ENCODE measurements at regions of chr4 and their contacts with region 1.

Region 1: DNA sequence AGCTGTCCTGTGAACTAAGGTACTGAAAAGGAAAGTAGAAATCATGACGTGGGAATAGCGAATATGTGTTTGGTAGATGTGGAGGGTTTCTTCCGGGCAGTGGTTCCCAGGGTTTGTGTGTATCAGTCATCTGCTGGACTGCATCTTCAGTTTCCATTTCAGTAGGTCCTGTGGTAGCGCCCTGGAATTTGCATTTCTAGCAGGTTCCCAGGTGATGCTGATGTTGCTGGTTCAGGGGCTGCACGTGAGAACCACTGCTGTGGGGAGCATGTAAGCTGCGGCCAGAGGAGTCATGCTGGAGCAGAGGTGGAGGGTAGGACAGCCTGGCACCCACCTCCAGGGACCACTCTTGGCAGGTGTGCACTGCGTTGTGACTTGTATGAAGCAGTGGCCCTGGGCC is 47.1 kb downstream of the ARHGAP10 start:
- DNase-seq: no peak
- ATAC-seq: no peak
- H3K4me3 ChIP-seq: no peak overlapping the region
- H3K27ac ChIP-seq: no peak overlapping the region
- H3K4me1 ChIP-seq: peaks cover 34 to 77% of the 10 kb centered on the region in 2 experiments
- H3K27me3 ChIP-seq: no peaks in the 10 kb centered on the region
- CTCF ChIP-seq: no peak
- POLR2A ChIP-seq: no peak
- RAD21 ChIP-seq: no peak

Region 2: DNA sequence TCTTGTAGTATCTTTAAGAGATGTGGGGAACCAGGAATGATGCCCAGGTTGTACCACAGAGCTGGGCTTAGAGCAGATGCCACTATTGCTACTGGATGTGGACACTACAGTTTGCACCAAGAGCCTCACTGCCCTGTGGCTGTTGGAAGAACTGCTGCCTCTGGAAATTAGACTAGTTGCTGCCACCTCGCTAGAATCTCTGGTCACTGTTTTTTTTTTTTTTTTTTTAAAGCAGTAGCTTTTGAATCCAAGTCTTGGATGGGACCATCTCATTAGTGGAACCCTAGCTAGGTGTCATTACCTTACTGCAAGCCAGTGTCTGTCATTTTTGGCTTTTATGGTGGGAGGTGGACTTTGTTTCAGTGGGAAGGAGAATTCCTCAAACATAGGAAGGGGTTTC is 58.5 kb after region 1 on chr4:
- CTCF ChIA-PET with region 1: no interaction called
- POLR2A ChIA-PET with region 1: no interaction called
- RAD21 ChIA-PET with region 1: no interaction called
- intact Hi-C with region 1: loop called (anchors 5 kb)
- DNase-seq: no peak
- ATAC-seq: peak; percentile 86
- H3K4me3 ChIP-seq: no peak overlapping the region
- H3K27ac ChIP-seq: no peak overlapping the region
- H3K4me1 ChIP-seq: peaks cover 8 to 10% of the 10 kb centered on the region in 2 experiments
- H3K27me3 ChIP-seq: no peaks in the 10 kb centered on the region
- CTCF ChIP-seq: peak in 2 of 3 experiments; percentile 20 to 38; a peak in 3 of 6 replicates
- POLR2A ChIP-seq: no peak
- RAD21 ChIP-seq: peak; percentile 33; the same call in 1 of the 2 replicates